Right cardiac atrium (tissue), 5 donors: ENCODE measurements at regions of chr2 and their contacts with region 1.

Region 1: DNA sequence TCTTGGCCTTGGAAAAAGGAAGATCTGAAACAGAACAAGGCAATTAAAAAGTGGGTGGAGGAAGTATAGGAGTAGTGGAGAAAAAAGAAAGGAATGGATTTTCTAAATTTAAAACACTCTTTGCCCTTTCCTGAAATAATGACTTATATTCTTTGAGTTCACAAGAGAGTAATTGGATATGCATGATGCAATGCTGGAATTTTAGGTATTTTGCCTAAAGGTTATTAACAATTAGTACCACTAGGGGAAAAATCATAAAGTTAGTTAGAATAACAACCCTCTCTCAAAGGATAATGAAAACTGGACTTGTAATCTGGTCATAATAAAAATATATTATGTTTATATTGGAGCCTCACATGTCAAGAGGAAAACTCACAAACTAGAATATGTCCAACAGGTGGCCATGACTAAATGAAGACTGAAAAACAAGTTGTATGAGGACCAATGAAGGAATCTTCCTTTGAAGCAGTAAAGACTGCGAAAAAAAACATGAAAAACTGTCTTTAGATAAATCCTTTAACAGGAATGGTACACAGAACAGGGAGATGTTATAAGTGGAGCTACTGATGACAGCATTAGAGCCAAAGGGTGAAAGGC is 281.8 kb downstream of the NCKAP5 start:
- DNase-seq: no peak
- ATAC-seq: no peak
- H3K4me3 ChIP-seq: no peak overlapping the region
- H3K27ac ChIP-seq: no peak overlapping the region
- H3K4me1 ChIP-seq: no peaks in the 10 kb centered on the region
- H3K27me3 ChIP-seq: no peaks in the 10 kb centered on the region

Region 2: DNA sequence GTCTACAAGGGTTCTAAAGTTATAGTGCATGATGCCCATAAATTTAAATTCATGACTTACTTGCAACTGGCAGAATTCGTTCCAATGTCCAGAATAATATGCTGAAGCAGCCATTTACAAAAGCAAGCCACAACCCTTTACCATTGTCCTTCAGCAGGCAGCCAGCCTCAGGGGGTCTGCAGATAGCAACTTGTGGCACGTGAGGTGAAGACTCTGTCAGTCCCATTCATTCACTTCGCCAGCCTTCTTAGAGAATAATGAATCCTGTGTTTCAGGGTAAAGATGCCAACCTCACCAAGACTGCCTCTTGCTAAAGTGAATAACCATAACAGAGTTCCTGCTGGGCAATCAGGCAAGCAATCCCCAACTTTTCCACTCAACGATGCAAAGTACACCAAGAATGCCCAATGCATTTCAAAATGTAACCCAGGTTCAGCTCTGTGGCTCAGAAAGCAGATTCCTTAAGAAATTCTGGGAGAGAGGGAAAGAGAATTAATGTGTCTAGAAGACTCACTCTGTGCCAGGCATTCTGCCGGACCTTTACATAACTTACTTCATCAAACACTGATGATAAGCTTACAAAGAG is 33.6 kb before region 1 on chr2:
- intact Hi-C with region 1: loop called in 1 of 4 experiments (anchors 2 kb)
- DNase-seq: no peak
- ATAC-seq: no peak
- H3K4me3 ChIP-seq: no peak overlapping the region
- H3K27ac ChIP-seq: no peak overlapping the region
- H3K4me1 ChIP-seq: no peaks in the 10 kb centered on the region
- H3K27me3 ChIP-seq: no peaks in the 10 kb centered on the region